Mammary epithelial cell (primary cell): ENCODE measurements at regions of chr10 and their contacts with region 1.

Region 1: DNA sequence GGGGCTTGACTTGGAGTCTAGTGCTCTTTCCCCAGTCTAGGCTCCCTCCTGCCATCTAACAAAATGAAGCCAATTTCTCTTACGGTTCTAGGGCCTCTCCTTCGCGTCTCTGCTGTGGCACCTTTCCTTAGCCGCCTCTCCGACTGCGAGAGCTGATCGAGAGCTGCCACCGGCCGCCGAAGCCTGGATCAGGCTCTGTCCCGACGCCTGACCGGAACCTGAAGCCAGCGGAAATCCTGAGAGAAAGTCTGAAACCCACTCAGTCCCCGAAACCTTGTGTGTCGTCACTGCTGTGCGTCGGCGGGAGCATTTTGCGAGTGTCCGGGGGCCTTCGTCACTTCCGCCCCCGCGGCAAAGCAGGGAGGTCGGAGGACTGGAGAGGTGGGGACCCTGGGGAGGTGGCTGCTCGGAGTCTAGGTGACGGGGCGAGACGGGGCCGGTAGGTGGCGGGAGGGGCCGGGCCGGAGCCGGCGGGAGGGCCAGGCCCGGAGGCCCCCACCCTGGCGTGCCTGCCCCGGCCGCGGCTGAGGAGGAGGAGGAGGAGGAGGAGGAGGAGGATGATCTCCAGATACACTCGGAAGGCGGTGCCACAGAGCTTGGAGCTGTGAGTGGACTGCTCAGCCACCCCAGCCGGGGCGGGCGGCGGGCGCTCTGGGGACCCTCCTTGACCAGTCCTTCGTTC is at the starts of genes ECD and FAM149B1:
- DNase-seq: peak; percentile 96
- H3K4me3 ChIP-seq: peak within 1 kb of the TSS; percentile 73 to 89 (median 84)
- H3K27ac ChIP-seq: peak within 1 kb of the TSS; percentile 95
- H3K4me1 ChIP-seq: peaks cover 4% of the 10 kb centered on the region
- H3K27me3 ChIP-seq: no peaks in the 10 kb centered on the region
- CTCF ChIP-seq: peak in 1 of 2 donors; percentile 19
- total RNA-seq, gene ECD: 29.7 to 37.0 TPM
- total RNA-seq, gene FAM149B1: 17.6 to 20.5 TPM

Region 2: GRCh38 chr10:73218431-73219191 is 50.7 kb after region 1 on chr10:
- CTCF ChIA-PET with region 1: interaction called, 4 read pairs
- dilution Hi-C with region 1: no loop called
- in situ Hi-C with region 1: no loop called
- intact Hi-C with region 1: loop called (anchors 1 kb)
- DNase-seq: no peak
- H3K4me3 ChIP-seq: no peak overlapping the region
- H3K27ac ChIP-seq: no peak overlapping the region
- H3K4me1 ChIP-seq: no peaks in the 10 kb centered on the region
- H3K27me3 ChIP-seq: no peaks in the 10 kb centered on the region
- CTCF ChIP-seq: peak; percentile 48 to 57

Region 3: GRCh38 chr10:73232887-73233286 is 65.0 kb after region 1 on chr10:
- CTCF ChIA-PET with region 1: no interaction called
- dilution Hi-C with region 1: no loop called
- in situ Hi-C with region 1: no loop called
- intact Hi-C with region 1: no loop called
- DNase-seq: no peak
- H3K4me3 ChIP-seq: no peak overlapping the region
- H3K27ac ChIP-seq: no peak overlapping the region
- H3K4me1 ChIP-seq: no peaks in the 10 kb centered on the region
- H3K27me3 ChIP-seq: no peaks in the 10 kb centered on the region
- CTCF ChIP-seq: peak in 1 of 2 donors; percentile 3

Region 4: GRCh38 chr10:73246783-73247508 is 79.0 kb after region 1 on chr10 and contains the start of gene DNAJC9:
- CTCF ChIA-PET with region 1: no interaction called
- dilution Hi-C with region 1: no loop called
- in situ Hi-C with region 1: no loop called
- intact Hi-C with region 1: loop called (anchors 1 kb)
- DNase-seq: peak; percentile 96
- H3K4me3 ChIP-seq: peak within 1 kb of the TSS; percentile 89 to 98 (median 91)
- H3K27ac ChIP-seq: peak within 1 kb of the TSS; percentile 92
- H3K4me1 ChIP-seq: peaks cover 40% of the 10 kb centered on the region
- H3K27me3 ChIP-seq: no peaks in the 10 kb centered on the region
- CTCF ChIP-seq: peak in 1 of 2 donors; percentile 26
- total RNA-seq, gene DNAJC9: 19.5 to 38.7 TPM